ENCODE measurements at regions of chr12 and their contacts with region 1.

Region 1: DNA sequence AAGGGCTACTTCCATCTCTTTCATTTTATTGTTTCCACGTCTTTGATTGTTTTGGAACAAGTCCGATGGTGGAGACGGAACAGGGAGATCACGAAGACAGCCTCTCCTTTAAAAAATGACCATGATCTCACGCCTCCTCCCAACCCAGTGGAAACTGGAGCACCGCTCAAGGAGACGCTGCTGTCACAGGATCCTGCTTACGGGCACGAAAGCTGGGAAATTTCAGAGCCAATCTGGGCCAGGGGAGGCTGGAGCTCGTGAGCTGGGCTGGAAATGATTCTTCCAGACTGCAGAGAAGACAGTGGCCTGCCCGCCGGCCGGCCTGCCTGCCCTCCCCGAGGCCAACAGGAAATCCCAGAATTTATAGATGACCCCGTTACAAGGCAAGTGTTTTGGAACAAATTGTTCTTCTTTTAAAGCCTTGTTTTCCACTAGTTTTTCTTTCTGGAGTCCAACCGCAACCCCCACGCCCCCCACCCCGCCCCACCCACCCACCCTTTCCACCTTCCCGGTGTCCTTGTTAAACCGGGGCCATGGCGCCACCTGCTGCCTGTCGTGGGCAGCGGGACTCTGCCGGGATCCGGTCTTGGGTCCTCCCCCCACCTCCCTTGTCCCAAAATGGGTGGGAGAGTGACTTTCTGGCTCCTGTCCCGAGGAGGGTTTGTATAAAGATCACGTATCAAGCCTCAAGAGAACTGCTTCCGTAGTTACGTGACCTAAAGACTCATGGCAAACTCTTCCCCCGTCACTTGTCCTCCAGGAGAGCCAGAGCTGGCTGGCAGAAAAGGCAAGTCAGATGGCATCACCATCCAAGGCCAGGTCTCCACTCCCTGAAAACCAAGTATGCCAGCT is 40.3 kb downstream of the MAP1LC3B2 start:
- DNase-seq: peak in 1 of 2 donors; percentile 93
- H3K4me3 ChIP-seq: peak overlapping the region; percentile 18 to 22
- H3K27ac ChIP-seq: peak overlapping the region; percentile 80
- H3K4me1 ChIP-seq: peaks cover 46% of the 10 kb centered on the region
- H3K27me3 ChIP-seq: no peaks in the 10 kb centered on the region
- CTCF ChIP-seq: peak in 2 of 3 experiments; percentile 42 to 64
- POLR2A ChIP-seq: no peak

Region 2: GRCh38 chr12:116009805-116010204 is 589.7 kb before region 1 on chr12:
- intact Hi-C with region 1: loop called (anchors 2 kb)
- DNase-seq: no peak
- H3K4me3 ChIP-seq: no peak overlapping the region
- H3K27ac ChIP-seq: no peak overlapping the region
- H3K4me1 ChIP-seq: no peaks in the 10 kb centered on the region
- H3K27me3 ChIP-seq: no peaks in the 10 kb centered on the region
- CTCF ChIP-seq: no peak
- POLR2A ChIP-seq: no peak

Region 3: GRCh38 chr12:116024769-116025168 is 574.7 kb before region 1 on chr12:
- intact Hi-C with region 1: no loop called
- DNase-seq: no peak
- H3K4me3 ChIP-seq: no peak overlapping the region
- H3K27ac ChIP-seq: no peak overlapping the region
- H3K4me1 ChIP-seq: no peaks in the 10 kb centered on the region
- H3K27me3 ChIP-seq: no peaks in the 10 kb centered on the region
- CTCF ChIP-seq: no peak
- POLR2A ChIP-seq: no peak

Region 4: DNA sequence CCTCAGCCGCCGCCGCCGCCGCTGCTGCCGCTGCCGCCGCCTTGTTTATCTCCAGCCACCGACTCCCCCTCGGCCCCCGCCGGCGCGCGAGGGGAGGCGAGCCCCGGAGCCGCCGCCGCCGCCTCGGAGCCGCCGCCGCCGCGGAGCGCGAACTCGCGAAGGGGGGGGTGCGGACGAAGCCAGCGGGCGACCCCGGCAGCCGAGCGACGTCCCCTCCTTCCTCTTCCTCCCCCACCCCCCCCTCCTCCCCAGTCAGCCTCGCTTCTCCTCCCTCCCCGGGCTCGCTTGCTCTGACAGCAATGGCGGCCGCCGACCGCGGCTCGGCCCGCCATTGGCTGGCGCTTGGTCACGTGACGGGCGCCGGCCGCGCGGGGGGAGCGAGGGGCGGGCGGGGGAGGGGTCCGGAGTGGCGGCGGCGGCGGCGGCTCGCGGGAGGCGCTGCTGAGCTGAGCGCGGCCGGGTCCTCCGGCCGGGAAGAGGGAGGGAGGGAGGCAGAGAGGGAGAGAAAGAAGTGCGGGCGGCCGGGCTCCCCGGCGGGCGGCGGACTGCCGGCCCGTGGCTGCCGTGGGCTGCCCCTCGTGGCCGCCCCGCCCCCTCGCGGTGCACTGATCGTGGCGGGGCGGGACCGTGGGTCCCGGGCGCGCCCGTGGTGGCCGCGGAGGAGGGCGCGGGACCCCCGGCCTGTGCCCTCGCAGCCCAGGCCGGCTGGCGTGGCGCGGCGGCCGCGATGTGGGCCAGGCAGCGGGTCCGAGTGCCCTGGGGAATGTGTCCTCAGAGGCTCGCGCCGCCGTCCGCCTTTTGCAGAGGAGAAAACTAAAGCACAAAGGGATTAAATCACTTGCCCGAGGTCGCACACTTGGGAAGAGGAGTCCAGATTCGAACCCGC is 321.9 kb before region 1 on chr12 and contains the start of gene MED13L:
- intact Hi-C with region 1: loop called (anchors 1 kb)
- DNase-seq: no peak
- H3K4me3 ChIP-seq: peak within 1 kb of the TSS; percentile 71 to 77
- H3K27ac ChIP-seq: peak within 1 kb of the TSS; percentile 91
- H3K4me1 ChIP-seq: peaks cover 35% of the 10 kb centered on the region
- H3K27me3 ChIP-seq: no peaks in the 10 kb centered on the region
- CTCF ChIP-seq: peak in 1 of 3 experiments; percentile 45
- POLR2A ChIP-seq: peak in 1 of 2 donors; percentile 33
- total RNA-seq, gene MED13L: 161 TPM

Region 5: GRCh38 chr12:116434155-116435011 is 165.1 kb before region 1 on chr12:
- intact Hi-C with region 1: loop called (anchors 10 kb)
- DNase-seq: peak in 1 of 2 donors; percentile 94
- H3K4me3 ChIP-seq: peak overlapping the region; percentile 14 to 28
- H3K27ac ChIP-seq: peak overlapping the region; percentile 67
- H3K4me1 ChIP-seq: peaks cover 32% of the 10 kb centered on the region
- H3K27me3 ChIP-seq: no peaks in the 10 kb centered on the region
- CTCF ChIP-seq: no peak
- POLR2A ChIP-seq: no peak

Region 6: GRCh38 chr12:116759783-116760621 is 160.5 kb after region 1 on chr12:
- intact Hi-C with region 1: no loop called
- DNase-seq: no peak
- H3K4me3 ChIP-seq: no peak overlapping the region
- H3K27ac ChIP-seq: no peak overlapping the region
- H3K4me1 ChIP-seq: no peaks in the 10 kb centered on the region
- H3K27me3 ChIP-seq: no peaks in the 10 kb centered on the region
- CTCF ChIP-seq: no peak
- POLR2A ChIP-seq: no peak

Region 7: DNA sequence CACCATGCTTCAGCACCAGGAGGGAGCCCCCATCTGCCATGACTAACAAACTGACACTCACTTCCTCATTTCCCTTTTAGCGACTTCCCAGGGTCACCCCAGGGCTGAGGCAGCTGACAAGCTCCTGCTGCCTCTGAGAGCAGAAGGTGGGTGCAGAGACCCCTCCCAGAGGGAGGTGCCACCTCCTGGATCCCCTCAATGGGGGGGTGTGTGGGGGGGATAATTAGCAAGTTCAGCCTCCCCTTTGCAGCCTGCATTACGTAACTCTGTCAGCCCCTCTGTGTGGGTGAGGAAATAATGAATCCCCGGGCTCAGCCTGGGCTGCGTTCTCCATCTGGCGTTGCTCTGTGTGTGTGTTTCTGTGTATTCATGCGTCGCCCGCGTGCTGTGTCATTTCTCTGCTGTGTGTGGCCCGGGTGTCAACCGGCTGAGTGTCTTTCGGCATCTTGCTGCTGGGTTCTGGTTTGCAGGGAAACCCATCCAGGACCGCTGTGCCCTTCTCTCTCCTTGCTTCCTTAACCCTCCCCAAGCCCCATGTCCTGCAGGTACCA is 733.9 kb after region 1 on chr12:
- intact Hi-C with region 1: no loop called
- DNase-seq: no peak
- H3K4me3 ChIP-seq: no peak overlapping the region
- H3K27ac ChIP-seq: no peak overlapping the region
- H3K4me1 ChIP-seq: peaks cover 11% of the 10 kb centered on the region
- H3K27me3 ChIP-seq: no peaks in the 10 kb centered on the region
- CTCF ChIP-seq: no peak
- POLR2A ChIP-seq: no peak

Measured in vagina (tissue), 2 donors.